ENCODE measurements at regions of chr4 and their contacts with region 1.

Region 1: DNA sequence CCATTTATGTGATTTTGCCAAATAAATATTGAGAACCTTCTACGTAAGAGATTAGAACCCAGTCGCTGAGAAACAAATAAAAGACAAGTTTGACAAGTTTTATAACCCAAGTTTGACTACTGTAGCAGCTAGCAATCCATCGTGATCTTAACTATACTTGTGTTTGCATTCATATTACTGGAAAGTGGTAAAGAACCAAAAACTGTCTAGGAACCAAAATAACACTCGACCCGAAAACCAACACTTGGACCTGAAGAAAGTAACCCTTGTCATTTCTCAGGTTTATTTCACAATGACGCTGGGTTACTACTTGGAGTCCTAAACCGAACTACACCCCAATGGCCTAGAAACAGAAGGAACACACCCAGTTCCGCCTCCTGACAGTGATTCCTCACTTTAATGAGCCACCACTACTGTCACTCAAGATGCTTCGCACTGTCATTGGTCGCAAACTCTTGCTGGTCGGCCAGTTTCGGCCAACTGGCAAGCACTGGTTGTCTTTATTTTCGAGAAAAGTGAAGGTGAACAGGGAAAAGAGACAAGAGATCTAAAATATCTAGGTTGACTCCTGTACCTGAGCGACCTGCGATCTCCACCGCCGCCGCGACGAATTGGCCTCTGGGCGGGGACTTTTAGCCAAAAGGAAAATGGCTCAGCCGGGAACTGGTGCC is 496 bp downstream of the FBXO8 start:
- DNase-seq: peak; percentile 95
- H3K4me3 Mint-ChIP-seq: peak overlapping the region; percentile 100
- H3K27ac Mint-ChIP-seq: peak overlapping the region; percentile 99
- H3K4me1 Mint-ChIP-seq: peaks cover 42% of the 10 kb centered on the region
- H3K27me3 Mint-ChIP-seq: no peaks in the 10 kb centered on the region

Region 2: GRCh38 chr4:173334085-173334772 is 948.7 kb before region 1 on chr4 and contains the start of gene HMGB2:
- intact Hi-C with region 1: loop called (anchors 5 kb)
- DNase-seq: peak; percentile 100
- H3K4me3 Mint-ChIP-seq: peak within 1 kb of the TSS; percentile 97
- H3K27ac Mint-ChIP-seq: peak within 1 kb of the TSS; percentile 100
- H3K4me1 Mint-ChIP-seq: peaks cover 47% of the 10 kb centered on the region
- H3K27me3 Mint-ChIP-seq: no peaks in the 10 kb centered on the region
- total RNA-seq, gene HMGB2: 311 and 315 TPM in 2 replicates

Region 3: DNA sequence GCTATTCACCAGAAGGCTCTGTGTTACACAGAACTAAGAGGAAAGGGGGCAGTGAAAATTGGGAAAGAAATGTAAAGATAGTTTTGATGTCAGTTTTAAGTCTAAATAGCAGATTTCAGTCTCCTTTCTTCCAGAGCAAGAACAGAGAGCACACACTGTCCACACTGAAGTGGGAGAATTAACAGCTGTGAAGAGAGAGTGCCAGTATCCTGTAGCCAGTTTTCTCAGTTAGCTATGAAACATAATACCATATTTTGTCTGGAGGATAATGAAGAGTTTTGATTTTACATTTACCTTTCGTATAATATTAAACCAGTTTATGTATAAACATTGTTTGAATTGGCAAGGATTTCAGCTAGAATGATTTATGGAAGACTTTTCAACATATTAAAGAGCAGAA is 34.6 kb before region 1 on chr4:
- intact Hi-C with region 1: no loop called
- DNase-seq: no peak
- H3K4me3 Mint-ChIP-seq: no peak overlapping the region
- H3K27ac Mint-ChIP-seq: no peak overlapping the region
- H3K4me1 Mint-ChIP-seq: peaks cover 2% of the 10 kb centered on the region
- H3K27me3 Mint-ChIP-seq: no peaks in the 10 kb centered on the region

Region 4: DNA sequence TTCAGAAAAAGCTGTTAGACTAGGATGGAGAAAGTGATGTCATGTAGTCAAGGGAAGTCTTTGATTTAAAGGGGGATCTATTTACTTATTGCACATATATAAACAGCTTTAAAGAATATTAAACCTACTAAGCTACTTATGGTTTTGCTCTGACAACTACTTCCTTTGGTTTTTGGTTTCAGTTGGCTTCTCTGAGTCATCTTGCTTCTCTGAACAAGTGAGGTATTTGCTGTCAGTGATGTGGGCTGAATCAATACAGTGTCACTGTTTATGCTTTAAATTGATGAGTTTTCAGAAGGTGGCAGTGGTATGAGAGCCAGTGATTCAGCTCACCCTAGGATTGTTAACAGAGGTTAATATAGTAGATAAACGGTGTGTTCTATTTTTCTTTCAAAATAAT is 75.9 kb after region 1 on chr4:
- intact Hi-C with region 1: loop called (anchors 1 kb)
- DNase-seq: peak; percentile 75
- H3K4me3 Mint-ChIP-seq: no peak overlapping the region
- H3K27ac Mint-ChIP-seq: peak overlapping the region; percentile 68
- H3K4me1 Mint-ChIP-seq: peaks cover 17% of the 10 kb centered on the region
- H3K27me3 Mint-ChIP-seq: peaks cover 22% of the 10 kb centered on the region

Region 5: DNA sequence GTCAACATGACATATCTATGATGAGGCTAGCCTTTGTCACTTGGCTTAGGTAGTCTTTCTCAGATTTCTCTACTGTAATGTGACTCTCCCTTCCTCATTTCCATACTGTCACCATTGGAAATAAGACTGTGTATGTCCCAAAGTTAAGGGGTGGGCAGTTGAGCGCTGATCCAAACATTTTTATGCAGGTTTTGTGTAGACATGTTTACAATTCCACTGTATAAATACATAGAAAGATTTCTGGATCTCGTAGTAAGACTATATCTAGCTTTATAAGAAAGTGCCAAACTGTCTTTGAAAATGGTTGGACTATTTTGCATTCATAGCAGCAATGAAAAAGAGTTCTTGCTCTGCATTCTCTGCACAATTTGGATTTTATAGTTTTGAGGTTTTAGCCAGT is 1301.9 kb after region 1 on chr4:
- intact Hi-C with region 1: no loop called
- DNase-seq: no peak
- H3K4me3 Mint-ChIP-seq: no peak overlapping the region
- H3K27ac Mint-ChIP-seq: no peak overlapping the region
- H3K4me1 Mint-ChIP-seq: no peaks in the 10 kb centered on the region
- H3K27me3 Mint-ChIP-seq: no peaks in the 10 kb centered on the region

Measured in activated CD4-positive, alpha-beta T cell treated with anti-CD3 and anti-CD28 coated beads, Interleukin-2, amount 10 ng/mL, durations not matched to agents 24 days and 14 days (primary cell).